PC-3 (cell line): ENCODE measurements at regions of chr5 and their contacts with region 1.

Region 1: DNA sequence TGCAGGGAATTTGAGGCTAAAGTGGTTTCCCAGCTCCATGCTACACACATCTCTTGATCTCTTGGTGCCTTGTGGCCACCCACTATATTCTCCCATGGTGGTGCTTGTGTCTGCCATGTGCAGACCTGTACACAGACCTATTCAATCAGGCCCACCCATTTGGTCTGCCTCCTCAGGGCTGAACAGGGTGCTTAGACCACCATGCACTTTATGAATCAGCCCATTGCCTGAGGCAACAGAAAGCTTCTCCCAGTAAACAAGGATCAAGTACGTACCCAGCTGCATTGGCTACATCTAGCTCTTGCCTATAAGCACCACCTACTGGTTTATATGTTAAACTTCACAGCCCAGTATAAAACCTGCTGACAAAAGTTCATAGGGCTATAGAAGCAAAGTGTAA is 664.3 kb upstream of the EDIL3 start:
- DNase-seq: peak; percentile 77
- ATAC-seq: peak; percentile 95
- H3K4me3 ChIP-seq: no peak overlapping the region
- H3K27ac ChIP-seq: no peak overlapping the region
- H3K4me1 ChIP-seq: no peaks in the 10 kb centered on the region
- H3K27me3 ChIP-seq: peaks cover 16% of the 10 kb centered on the region; the same call in 1 of the 2 replicates
- CTCF ChIP-seq: peak; percentile 83

Region 2: DNA sequence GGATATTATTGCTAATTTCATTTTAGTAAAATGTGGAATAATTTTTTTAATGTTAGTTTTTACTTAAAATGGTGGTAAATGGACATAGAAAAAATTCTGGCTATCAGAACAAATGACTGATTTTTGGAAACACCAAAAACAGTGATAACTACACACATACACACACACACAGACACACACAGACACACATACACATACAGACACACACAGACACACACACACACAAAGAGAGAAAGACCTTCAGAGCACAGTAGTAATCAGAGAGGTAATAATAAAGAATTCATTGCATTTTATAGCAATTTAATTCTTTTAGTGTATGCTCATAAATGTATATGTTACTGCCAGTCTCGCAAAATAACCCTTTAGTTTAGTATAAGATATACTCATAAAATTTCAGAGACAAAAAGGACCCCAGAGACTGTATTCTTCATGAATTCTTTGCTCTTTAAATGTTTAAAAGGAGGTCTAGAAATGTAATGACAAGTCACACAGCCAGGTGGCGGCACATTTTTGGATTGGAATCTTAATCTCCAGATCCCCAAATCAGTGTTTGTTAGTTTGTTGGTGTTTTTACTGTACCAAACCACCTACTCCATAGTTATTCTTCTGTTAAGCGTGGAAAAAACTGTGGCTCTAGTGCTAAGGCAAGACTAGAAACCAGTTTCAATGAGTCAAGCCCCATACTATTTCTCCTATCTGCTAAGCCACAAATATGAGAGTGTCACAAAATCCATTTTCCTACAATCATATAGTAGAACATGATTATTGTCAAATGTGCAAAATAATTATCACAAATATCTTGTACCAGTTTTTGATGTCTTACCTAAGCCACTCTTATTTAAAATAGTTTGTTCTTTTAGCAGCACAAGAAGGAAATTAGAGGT is 774.2 kb before region 1 on chr5:
- CTCF ChIA-PET with region 1: no interaction called
- POLR2A ChIA-PET with region 1: no interaction called
- intact Hi-C with region 1: loop called (anchors 5 kb)
- DNase-seq: peak; percentile 60
- ATAC-seq: no peak
- H3K4me3 ChIP-seq: no peak overlapping the region
- H3K27ac ChIP-seq: no peak overlapping the region
- H3K4me1 ChIP-seq: no peaks in the 10 kb centered on the region
- H3K27me3 ChIP-seq: no peaks in the 10 kb centered on the region
- CTCF ChIP-seq: peak; percentile 72

Region 3: DNA sequence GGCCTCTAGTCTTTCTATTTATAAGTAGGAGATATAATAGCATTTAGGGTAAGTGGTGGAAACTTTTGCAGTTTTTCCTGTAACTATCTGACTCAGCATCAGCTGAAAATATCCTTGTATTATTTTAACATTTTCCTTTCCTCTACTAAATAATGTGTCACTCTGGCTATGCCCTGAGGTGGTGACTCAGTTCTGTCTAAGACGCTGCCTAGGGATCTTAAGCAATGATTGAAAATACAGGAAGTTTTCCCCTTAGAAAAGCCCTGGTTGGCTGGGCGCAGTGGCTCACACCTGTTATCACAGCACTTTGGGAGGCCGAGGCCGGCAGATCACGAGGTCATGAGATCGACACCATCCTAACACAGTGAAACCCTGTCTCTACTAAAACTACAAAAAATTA is 655.1 kb before region 1 on chr5:
- CTCF ChIA-PET with region 1: no interaction called
- POLR2A ChIA-PET with region 1: no interaction called
- intact Hi-C with region 1: loop called (anchors 10 kb)
- DNase-seq: peak; percentile 89
- ATAC-seq: peak; percentile 99
- H3K4me3 ChIP-seq: no peak overlapping the region
- H3K27ac ChIP-seq: peak overlapping the region; percentile 64
- H3K4me1 ChIP-seq: peaks cover 18% of the 10 kb centered on the region
- H3K27me3 ChIP-seq: no peaks in the 10 kb centered on the region
- CTCF ChIP-seq: no peak

Region 4: GRCh38 chr5:84478603-84479002 is 570.4 kb before region 1 on chr5:
- CTCF ChIA-PET with region 1: no interaction called
- POLR2A ChIA-PET with region 1: no interaction called
- intact Hi-C with region 1: loop called (anchors 5 kb)
- DNase-seq: peak; percentile 62
- ATAC-seq: peak; percentile 74
- H3K4me3 ChIP-seq: no peak overlapping the region
- H3K27ac ChIP-seq: no peak overlapping the region
- H3K4me1 ChIP-seq: no peaks in the 10 kb centered on the region; the same call in 1 of the 2 replicates
- H3K27me3 ChIP-seq: no peaks in the 10 kb centered on the region
- CTCF ChIP-seq: no peak

Region 5: GRCh38 chr5:84986688-84987087 is 62.3 kb before region 1 on chr5:
- CTCF ChIA-PET with region 1: no interaction called
- POLR2A ChIA-PET with region 1: no interaction called
- intact Hi-C with region 1: no loop called
- DNase-seq: peak; percentile 11
- ATAC-seq: no peak
- H3K4me3 ChIP-seq: no peak overlapping the region
- H3K27ac ChIP-seq: no peak overlapping the region
- H3K4me1 ChIP-seq: no peaks in the 10 kb centered on the region
- H3K27me3 ChIP-seq: no peaks in the 10 kb centered on the region
- CTCF ChIP-seq: no peak